Activated naive CD4-positive, alpha-beta T cell treated with anti-CD3 and anti-CD28 coated beads for 36 hours (primary cell): ENCODE measurements at regions of chr11 and their contacts with region 1.

Region 1: DNA sequence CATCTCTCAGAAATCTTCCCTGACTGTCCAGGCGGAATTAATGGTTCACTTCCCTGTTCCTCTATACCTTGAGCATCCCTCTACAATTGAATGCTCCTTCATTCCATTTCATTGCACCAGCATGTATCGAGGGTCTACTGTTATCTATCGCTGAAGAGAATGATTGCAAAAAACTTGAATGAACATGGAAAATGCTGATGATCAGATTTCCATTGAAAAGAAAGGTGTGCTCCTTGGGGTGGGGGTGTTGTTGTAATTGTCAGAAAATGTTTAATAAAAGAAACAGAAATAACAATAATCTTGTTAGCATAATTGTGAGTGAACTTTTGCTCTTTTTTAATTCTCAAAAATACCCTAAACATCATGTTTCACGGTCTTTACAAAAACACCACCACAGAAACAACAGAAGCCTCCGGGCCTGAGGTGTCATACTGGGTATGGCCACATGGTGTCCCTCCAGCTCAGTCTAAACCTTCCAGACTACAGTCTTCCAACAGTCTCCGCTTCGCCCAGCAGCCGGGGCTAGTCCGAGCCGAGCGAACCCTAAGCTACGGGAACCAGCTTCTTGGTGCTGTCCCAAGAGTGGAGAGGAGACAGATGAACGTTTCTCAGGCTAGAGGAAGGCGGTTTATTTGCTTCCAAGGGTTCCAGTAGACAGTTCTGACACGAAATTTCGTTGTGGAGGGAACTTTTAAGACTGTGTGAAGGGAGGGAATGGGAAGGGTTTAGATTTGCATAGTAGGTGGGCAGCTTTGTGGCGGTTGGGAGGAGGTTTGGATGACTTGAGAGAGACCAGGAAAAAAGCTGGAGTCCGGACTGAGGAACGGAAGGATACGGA is 75.8 kb upstream of the ZBED5 start:
- DNase-seq: peak; percentile 93
- H3K4me3 Mint-ChIP-seq: peak overlapping the region; percentile 70
- H3K27ac Mint-ChIP-seq: no peak overlapping the region
- H3K4me1 Mint-ChIP-seq: peaks cover 12% of the 10 kb centered on the region
- H3K27me3 Mint-ChIP-seq: peaks cover 31% of the 10 kb centered on the region

Region 2: DNA sequence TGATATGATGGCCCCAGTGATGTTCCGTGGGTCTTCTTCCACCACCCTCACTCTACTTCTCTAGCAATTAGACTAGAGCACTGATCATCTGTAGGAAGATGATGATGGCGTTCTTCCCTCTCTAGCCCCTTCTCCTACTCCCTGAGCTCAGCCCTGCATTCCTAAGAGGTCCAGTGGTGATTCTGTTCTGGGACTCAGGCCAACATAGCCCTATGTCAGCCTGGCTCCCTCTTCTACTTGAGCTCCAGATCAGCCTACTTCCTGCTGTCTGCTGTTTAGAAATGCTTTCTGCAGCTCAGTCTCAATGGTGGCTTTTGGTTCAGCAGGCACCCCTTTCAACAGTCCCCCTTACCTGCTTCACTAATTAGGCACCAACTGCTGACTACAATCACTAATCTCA is 10.3 kb after region 1 on chr11:
- CTCF ChIA-PET with region 1: interaction called, 14 read pairs
- intact Hi-C with region 1: no loop called
- DNase-seq: no peak
- H3K4me3 Mint-ChIP-seq: no peak overlapping the region
- H3K27ac Mint-ChIP-seq: no peak overlapping the region
- H3K4me1 Mint-ChIP-seq: peaks cover 3% of the 10 kb centered on the region
- H3K27me3 Mint-ChIP-seq: peaks cover 10% of the 10 kb centered on the region

Region 3: GRCh38 chr11:11022125-11022730 is 88.6 kb after region 1 on chr11:
- CTCF ChIA-PET with region 1: interaction called, 40 read pairs
- intact Hi-C with region 1: loop called (anchors 1 kb)
- DNase-seq: peak; percentile 34
- H3K4me3 Mint-ChIP-seq: no peak overlapping the region
- H3K27ac Mint-ChIP-seq: no peak overlapping the region
- H3K4me1 Mint-ChIP-seq: no peaks in the 10 kb centered on the region
- H3K27me3 Mint-ChIP-seq: no peaks in the 10 kb centered on the region

Region 4: GRCh38 chr11:11036848-11037732 is 103.4 kb after region 1 on chr11:
- CTCF ChIA-PET with region 1: interaction called, 10 read pairs
- intact Hi-C with region 1: no loop called
- DNase-seq: peak; percentile 59
- H3K4me3 Mint-ChIP-seq: no peak overlapping the region
- H3K27ac Mint-ChIP-seq: no peak overlapping the region
- H3K4me1 Mint-ChIP-seq: peaks cover 8% of the 10 kb centered on the region
- H3K27me3 Mint-ChIP-seq: no peaks in the 10 kb centered on the region

Region 5: GRCh38 chr11:11142430-11142829 is 208.8 kb after region 1 on chr11:
- CTCF ChIA-PET with region 1: no interaction called
- intact Hi-C with region 1: no loop called
- DNase-seq: no peak
- H3K4me3 Mint-ChIP-seq: no peak overlapping the region
- H3K27ac Mint-ChIP-seq: no peak overlapping the region
- H3K4me1 Mint-ChIP-seq: peaks cover 10% of the 10 kb centered on the region
- H3K27me3 Mint-ChIP-seq: no peaks in the 10 kb centered on the region

Region 6: GRCh38 chr11:11207428-11207827 is 273.8 kb after region 1 on chr11:
- CTCF ChIA-PET with region 1: no interaction called
- intact Hi-C with region 1: no loop called
- DNase-seq: no peak
- H3K4me3 Mint-ChIP-seq: no peak overlapping the region
- H3K27ac Mint-ChIP-seq: no peak overlapping the region
- H3K4me1 Mint-ChIP-seq: no peaks in the 10 kb centered on the region
- H3K27me3 Mint-ChIP-seq: peaks cover 5% of the 10 kb centered on the region

Region 7: GRCh38 chr11:11265994-11266606 is 332.4 kb after region 1 on chr11:
- CTCF ChIA-PET with region 1: no interaction called
- intact Hi-C with region 1: loop called (anchors 5 kb)
- DNase-seq: peak; percentile 79
- H3K4me3 Mint-ChIP-seq: no peak overlapping the region
- H3K27ac Mint-ChIP-seq: no peak overlapping the region
- H3K4me1 Mint-ChIP-seq: no peaks in the 10 kb centered on the region
- H3K27me3 Mint-ChIP-seq: no peaks in the 10 kb centered on the region

Region 8: DNA sequence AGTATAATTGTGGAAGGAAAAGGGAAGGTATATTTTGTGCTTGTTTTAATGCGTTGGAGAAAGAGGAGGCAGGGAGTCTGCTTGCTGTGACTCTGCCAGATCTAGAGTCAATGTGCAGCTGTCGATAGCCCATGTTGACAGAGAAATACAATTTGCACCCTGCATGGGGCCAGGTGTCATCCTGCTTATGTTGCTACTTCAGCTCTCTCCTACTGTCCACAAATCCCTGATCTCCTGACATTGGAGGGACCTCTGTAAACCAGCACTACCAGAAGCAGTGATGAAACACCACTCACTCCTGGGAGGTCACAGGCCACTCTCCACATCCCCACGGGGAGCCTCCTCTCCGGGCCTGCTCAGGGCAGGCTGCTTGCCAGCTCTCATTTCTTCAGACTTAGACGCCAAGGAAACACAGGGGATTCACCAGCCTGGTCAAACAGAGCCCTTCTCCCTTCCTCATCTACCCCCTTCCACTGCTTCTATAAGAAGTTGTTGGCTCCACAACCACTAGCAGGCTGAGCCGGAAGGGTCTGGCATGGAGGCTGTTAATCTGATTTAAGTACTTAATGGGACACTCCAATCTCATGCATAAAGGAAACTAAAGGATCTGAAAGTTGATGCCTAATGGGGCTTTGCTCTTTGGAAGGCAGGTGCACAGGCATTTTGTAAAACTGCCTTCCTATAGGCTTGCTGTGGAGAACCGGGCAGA is 449.3 kb after region 1 on chr11:
- CTCF ChIA-PET with region 1: no interaction called
- intact Hi-C with region 1: no loop called
- DNase-seq: no peak
- H3K4me3 Mint-ChIP-seq: no peak overlapping the region
- H3K27ac Mint-ChIP-seq: no peak overlapping the region
- H3K4me1 Mint-ChIP-seq: no peaks in the 10 kb centered on the region
- H3K27me3 Mint-ChIP-seq: no peaks in the 10 kb centered on the region